ENCODE measurements at regions of chr1 and their contacts with region 1.

Region 1: GRCh38 chr1:222455188-222455879 is 92.6 kb downstream of the HHIPL2 start:
- DNase-seq: peak; percentile 90
- H3K4me3 Mint-ChIP-seq: no peak overlapping the region
- H3K27ac Mint-ChIP-seq: peak overlapping the region; percentile 22
- H3K4me1 Mint-ChIP-seq: peaks cover 18% of the 10 kb centered on the region
- H3K27me3 Mint-ChIP-seq: peaks cover 7% of the 10 kb centered on the region

Region 2: GRCh38 chr1:221263831-221264767 is 1191.2 kb before region 1 on chr1:
- CTCF ChIA-PET with region 1: interaction called, 11 read pairs
- DNase-seq: peak; percentile 48
- H3K4me3 Mint-ChIP-seq: no peak overlapping the region
- H3K27ac Mint-ChIP-seq: no peak overlapping the region
- H3K4me1 Mint-ChIP-seq: no peaks in the 10 kb centered on the region
- H3K27me3 Mint-ChIP-seq: no peaks in the 10 kb centered on the region

Region 3: GRCh38 chr1:221478050-221478949 is 977.0 kb before region 1 on chr1:
- CTCF ChIA-PET with region 1: interaction called, 28 read pairs
- DNase-seq: peak; percentile 64
- H3K4me3 Mint-ChIP-seq: no peak overlapping the region
- H3K27ac Mint-ChIP-seq: no peak overlapping the region
- H3K4me1 Mint-ChIP-seq: no peaks in the 10 kb centered on the region
- H3K27me3 Mint-ChIP-seq: peaks cover 8% of the 10 kb centered on the region

Region 4: GRCh38 chr1:222095606-222096475 is 359.5 kb before region 1 on chr1:
- CTCF ChIA-PET with region 1: interaction called, 26 read pairs
- DNase-seq: peak; percentile 75
- H3K4me3 Mint-ChIP-seq: no peak overlapping the region
- H3K27ac Mint-ChIP-seq: no peak overlapping the region
- H3K4me1 Mint-ChIP-seq: no peaks in the 10 kb centered on the region
- H3K27me3 Mint-ChIP-seq: no peaks in the 10 kb centered on the region

Region 5: GRCh38 chr1:222465211-222466041 is 10.1 kb after region 1 on chr1:
- CTCF ChIA-PET with region 1: interaction called, 10 read pairs
- DNase-seq: peak; percentile 78
- H3K4me3 Mint-ChIP-seq: peak overlapping the region; percentile 72
- H3K27ac Mint-ChIP-seq: peak overlapping the region; percentile 84
- H3K4me1 Mint-ChIP-seq: peaks cover 14% of the 10 kb centered on the region
- H3K27me3 Mint-ChIP-seq: peaks cover 12% of the 10 kb centered on the region